ENCODE measurements at regions of chr6 and their contacts with region 1.

Region 1: DNA sequence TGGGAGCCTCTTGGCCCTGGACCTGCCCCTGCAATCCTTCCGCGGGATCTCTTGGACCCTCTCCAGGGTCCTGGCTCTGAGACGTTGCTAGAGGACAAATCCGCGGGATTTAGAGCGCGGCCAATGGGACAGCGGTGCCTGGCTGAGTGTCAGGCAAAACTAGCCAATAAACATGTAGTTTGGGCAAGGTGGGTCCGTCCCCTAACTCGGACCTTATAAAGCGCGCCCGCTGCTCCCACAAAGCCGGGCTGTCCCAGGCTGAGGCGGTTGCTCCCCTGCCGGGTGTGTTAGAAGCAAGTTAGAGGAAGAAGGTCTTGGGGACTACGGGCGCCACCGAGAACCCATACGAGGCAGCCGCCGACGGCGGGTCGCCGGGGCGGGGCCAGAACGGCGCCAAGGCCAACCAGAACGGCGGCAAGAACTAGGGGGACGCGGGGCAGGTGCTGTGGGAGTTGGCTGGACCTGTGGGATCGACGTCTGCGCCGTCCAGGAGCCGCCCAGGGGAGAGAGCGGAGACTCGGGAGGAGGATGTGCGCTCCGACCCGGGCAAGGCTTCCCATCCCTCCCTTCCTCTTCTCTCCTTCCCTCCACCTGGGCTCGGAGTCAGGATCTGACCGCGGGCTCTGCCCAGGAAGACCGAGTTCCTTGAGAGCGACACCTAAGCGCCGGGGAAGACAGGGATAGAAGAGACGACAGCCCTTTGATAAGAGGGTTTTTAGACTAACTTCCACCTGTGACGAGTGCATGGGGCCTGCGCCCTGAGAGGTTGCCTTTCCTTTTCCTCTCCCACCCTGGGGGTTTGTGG is 6.5 kb upstream of the TMEM14A start:
- DNase-seq: peak; percentile 94
- ATAC-seq: peak; percentile 94
- H3K4me3 ChIP-seq: peak overlapping the region; percentile 81
- H3K27ac ChIP-seq: no peak overlapping the region
- H3K4me1 ChIP-seq: peaks cover 24% of the 10 kb centered on the region
- H3K27me3 ChIP-seq: no peaks in the 10 kb centered on the region
- CTCF ChIP-seq: no peak

Region 2: GRCh38 chr6:52162940-52163908 is 501.2 kb before region 1 on chr6:
- CTCF ChIA-PET with region 1: no interaction called
- POLR2A ChIA-PET with region 1: no interaction called
- intact Hi-C with region 1: loop called (anchors 1 kb)
- DNase-seq: peak; percentile 75
- ATAC-seq: peak; percentile 86
- H3K4me3 ChIP-seq: no peak overlapping the region
- H3K27ac ChIP-seq: no peak overlapping the region
- H3K4me1 ChIP-seq: no peaks in the 10 kb centered on the region
- H3K27me3 ChIP-seq: 0 out of 2 replicates have a peak, but pooled peaks cover 4% of the 10 kb centered on the region
- CTCF ChIP-seq: peak; percentile 89

Region 3: GRCh38 chr6:52352239-52353008 is 312.0 kb before region 1 on chr6:
- CTCF ChIA-PET with region 1: no interaction called
- POLR2A ChIA-PET with region 1: no interaction called
- intact Hi-C with region 1: loop called (anchors 2 kb)
- DNase-seq: peak; percentile 99
- ATAC-seq: peak; percentile 93
- H3K4me3 ChIP-seq: peak overlapping the region; percentile 20; the same call in 1 of the 2 replicates
- H3K27ac ChIP-seq: peak overlapping the region; percentile 96
- H3K4me1 ChIP-seq: peaks cover 27% of the 10 kb centered on the region
- H3K27me3 ChIP-seq: no peaks in the 10 kb centered on the region
- CTCF ChIP-seq: no peak

Region 4: DNA sequence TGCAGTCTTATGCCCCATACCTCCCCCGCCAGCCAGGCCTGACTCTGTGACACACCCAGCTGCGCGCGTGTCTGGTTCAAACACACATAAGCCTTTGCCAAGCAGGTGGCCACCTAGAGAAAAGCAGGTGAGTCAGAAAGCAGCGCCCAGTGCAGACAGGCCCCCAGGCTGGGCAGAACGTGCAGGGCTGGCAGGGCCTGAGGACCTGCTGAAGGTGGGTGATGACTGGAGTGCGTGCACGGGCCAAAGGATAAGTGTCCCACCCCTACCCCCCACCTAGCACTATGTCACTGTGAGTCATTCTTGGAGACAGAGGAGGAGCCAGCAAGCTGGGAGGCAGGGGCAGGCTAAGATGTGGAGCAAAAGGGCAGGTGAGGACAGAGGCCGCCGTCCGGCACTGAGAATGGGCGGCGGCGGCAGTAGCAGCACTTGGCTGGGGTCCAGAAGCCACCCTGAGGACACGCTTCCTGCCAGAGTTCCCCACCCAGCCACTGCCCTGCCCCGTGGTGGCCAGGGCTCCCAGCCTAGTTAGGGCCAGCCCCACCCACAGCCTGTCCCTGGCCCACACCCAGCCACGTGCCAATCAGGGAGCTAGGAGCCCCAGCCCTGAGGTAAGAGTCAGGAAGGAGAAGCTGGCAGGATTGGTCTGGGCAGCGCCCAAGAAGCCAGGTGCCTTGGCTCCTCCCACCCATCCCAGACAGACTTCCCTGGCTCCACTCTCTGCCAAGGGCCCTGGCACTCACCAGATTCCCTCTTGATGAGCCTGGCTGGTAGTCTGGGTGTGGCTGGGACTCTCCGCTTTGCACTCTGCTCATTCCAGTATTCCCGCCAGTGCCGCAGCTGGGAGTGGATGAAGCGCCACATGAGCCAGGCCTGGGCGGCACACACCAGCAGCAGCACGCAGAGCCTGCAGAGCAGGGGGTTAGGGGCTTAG is 160.3 kb before region 1 on chr6:
- CTCF ChIA-PET with region 1: no interaction called
- POLR2A ChIA-PET with region 1: no interaction called
- intact Hi-C with region 1: loop called (anchors 2 kb)
- DNase-seq: peak; percentile 99
- ATAC-seq: peak; percentile 77
- H3K4me3 ChIP-seq: peak overlapping the region; percentile 46; the same call in 1 of the 2 replicates
- H3K27ac ChIP-seq: peak overlapping the region; percentile 65
- H3K4me1 ChIP-seq: peaks cover 34% of the 10 kb centered on the region
- H3K27me3 ChIP-seq: no peaks in the 10 kb centered on the region
- CTCF ChIP-seq: no peak

Region 5: GRCh38 chr6:52598123-52598823 is 66.1 kb before region 1 on chr6:
- CTCF ChIA-PET with region 1: no interaction called
- POLR2A ChIA-PET with region 1: no interaction called
- intact Hi-C with region 1: loop called (anchors 5 kb)
- DNase-seq: peak; percentile 21
- ATAC-seq: peak; percentile 33; the same call in 1 of the 2 replicates
- H3K4me3 ChIP-seq: no peak overlapping the region
- H3K27ac ChIP-seq: no peak overlapping the region
- H3K4me1 ChIP-seq: peaks cover 9% of the 10 kb centered on the region; the same call in 1 of the 2 replicates
- H3K27me3 ChIP-seq: no peaks in the 10 kb centered on the region
- CTCF ChIP-seq: peak; percentile 72

Region 6: GRCh38 chr6:52922161-52922560 is 257.8 kb after region 1 on chr6:
- CTCF ChIA-PET with region 1: no interaction called
- POLR2A ChIA-PET with region 1: no interaction called
- intact Hi-C with region 1: no loop called
- DNase-seq: no peak
- ATAC-seq: no peak
- H3K4me3 ChIP-seq: no peak overlapping the region
- H3K27ac ChIP-seq: no peak overlapping the region
- H3K4me1 ChIP-seq: peaks cover 37% of the 10 kb centered on the region
- H3K27me3 ChIP-seq: no peaks in the 10 kb centered on the region
- CTCF ChIP-seq: no peak

Measured in PC-3 (cell line).